ENCODE measurements at regions of chr3 and their contacts with region 1.

Region 1: DNA sequence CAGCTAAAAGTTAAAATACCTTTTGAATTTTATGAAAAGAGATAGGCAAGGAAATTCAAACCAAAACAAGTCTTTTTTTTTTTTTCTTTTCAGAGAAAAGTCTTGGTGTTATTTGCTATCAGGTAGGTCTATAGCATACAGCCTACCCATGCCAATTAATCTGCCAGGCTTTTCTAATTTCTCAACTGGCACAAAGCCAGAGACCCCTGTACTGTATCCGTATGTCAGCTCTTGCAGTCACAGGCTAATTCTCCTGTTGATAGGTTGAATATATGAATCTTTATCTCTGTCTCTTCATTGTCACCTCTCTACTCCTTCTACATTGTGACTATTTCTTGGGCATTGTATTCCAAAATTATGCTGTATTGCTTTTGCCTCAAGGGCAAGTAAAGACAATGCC is 133.4 kb downstream of the IL5RA start:
- DNase-seq: no peak
- H3K4me3 ChIP-seq: no peak overlapping the region
- H3K27ac ChIP-seq: no peak overlapping the region
- H3K4me1 ChIP-seq: no peaks in the 10 kb centered on the region
- H3K27me3 ChIP-seq: no peaks in the 10 kb centered on the region
- CTCF ChIP-seq: no peak
- EP300 ChIP-seq: no peak
- POLR2A ChIP-seq: no peak

Region 2: GRCh38 chr3:2992534-2992933 is 15.7 kb after region 1 on chr3:
- in situ Hi-C with region 1: no loop called
- intact Hi-C with region 1: loop called (anchors 1 kb)
- DNase-seq: no peak
- H3K4me3 ChIP-seq: no peak overlapping the region
- H3K27ac ChIP-seq: no peak overlapping the region
- H3K4me1 ChIP-seq: peaks cover 0 to 7% (median 0%) of the 10 kb centered on the region in 4 donors
- H3K27me3 ChIP-seq: no peaks in the 10 kb centered on the region
- CTCF ChIP-seq: no peak
- EP300 ChIP-seq: no peak
- POLR2A ChIP-seq: no peak

Measured in transverse colon (tissue), 4 donors.